ENCODE measurements at regions of chr21 and their contacts with region 1.

Region 1: DNA sequence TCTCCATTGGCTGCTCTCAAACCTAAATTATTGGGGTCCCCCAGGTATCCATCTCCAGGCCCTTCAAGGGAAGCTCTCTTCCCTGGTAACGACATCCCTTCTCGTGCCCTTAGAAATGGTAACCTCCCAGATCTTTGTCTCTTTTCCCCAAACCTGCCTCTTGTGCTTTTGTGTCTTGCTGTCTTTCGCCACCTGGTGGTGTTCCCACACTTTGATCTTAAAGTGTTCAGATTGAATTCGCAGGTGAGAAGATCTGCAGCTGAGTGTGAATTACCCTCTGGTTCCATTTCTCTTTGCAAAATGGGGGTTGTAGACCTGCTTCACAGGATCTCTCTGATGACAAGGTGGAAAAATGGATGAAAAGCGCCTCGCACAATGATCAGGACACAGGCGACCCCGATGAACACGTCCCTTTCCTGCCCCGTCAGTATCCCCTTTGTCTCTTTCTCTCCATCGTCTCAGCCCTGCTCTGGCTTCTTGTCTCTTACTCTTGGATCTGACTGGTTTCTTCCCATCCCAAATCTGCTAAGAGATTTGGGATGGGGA is 53.1 kb downstream of the DOP1B start:
- DNase-seq: peak; percentile 39
- H3K4me3 ChIP-seq: no peak overlapping the region
- H3K27ac ChIP-seq: peak overlapping the region in 1 of 2 experiments; percentile 74; a peak in 2 of 4 replicates
- H3K4me1 ChIP-seq: peaks cover 0 to 39% of the 10 kb centered on the region in 2 experiments; a peak in 2 of 4 replicates
- H3K27me3 ChIP-seq: no peaks in the 10 kb centered on the region
- CTCF ChIP-seq: peak; percentile 68
- EP300 ChIP-seq: no peak
- RAD21 ChIP-seq: peak; percentile 75

Region 2: DNA sequence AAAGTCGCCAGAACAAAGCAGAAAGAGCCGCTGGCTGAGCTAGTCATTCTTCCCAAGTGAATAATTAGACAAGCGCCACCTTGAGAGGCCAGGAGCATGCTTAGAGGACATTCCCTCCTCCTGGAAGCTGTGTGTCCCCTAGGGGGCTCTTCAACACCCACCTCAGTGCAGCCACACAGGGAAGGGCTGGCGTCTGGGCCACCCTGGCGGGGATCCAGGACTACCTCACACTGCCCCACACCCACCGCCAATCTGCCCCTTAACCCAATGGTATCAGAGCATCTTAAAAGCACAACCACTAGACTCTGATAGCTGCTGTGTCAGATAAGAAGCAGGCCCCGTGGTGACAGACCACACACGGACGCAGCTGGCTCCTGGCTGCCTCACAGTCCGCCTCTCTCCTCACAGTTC is 174.3 kb before region 1 on chr21:
- CTCF ChIA-PET with region 1: no interaction called
- POLR2A ChIA-PET with region 1: no interaction called
- DNase-seq: peak; percentile 90
- H3K4me3 ChIP-seq: no peak overlapping the region
- H3K27ac ChIP-seq: peak overlapping the region in 1 of 2 experiments; percentile 94; a peak in 2 of 4 replicates
- H3K4me1 ChIP-seq: peaks cover 0 to 25% of the 10 kb centered on the region in 2 experiments; a peak in 2 of 4 replicates
- H3K27me3 ChIP-seq: no peaks in the 10 kb centered on the region
- CTCF ChIP-seq: 0 out of 2 replicates have a peak, but pooled peaks have one; percentile 9
- EP300 ChIP-seq: peak in 1 of 2 experiments; percentile 92; a peak in 2 of 4 replicates
- RAD21 ChIP-seq: peak; percentile 44

Region 3: DNA sequence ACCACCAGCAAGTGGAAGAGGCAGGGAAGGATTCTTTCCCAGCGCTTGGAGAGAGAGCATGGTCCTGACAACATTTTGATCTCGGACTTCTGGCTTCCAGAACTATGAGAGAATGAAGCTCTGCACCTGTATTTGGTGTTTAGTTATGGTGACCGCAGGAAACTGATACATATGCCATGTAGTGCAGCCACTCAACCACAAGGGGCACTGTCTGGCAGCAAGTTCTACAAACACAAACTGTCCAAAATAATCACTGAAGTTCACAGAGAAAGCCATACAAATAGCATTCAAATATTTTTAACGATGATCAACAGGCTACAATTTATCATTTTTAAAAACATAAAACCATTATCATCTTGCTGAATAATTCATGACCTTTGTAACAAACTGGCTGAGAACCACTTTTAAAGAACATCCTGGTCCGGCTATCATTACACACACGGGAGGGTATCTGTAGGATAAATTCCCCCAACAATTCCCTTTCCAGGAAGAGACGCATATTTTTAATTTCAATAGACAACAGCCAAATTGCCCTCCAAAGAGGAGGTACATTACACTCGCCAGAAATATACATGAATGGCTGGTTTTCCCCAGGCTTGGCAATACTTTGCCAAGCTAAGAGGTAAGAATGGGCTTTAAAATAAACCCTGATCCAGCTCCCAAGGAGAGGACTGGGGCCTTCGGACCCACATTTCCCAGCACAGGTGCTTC is 84.0 kb before region 1 on chr21:
- CTCF ChIA-PET with region 1: interaction called, 13 read pairs
- POLR2A ChIA-PET with region 1: no interaction called
- DNase-seq: peak; percentile 60
- H3K4me3 ChIP-seq: no peak overlapping the region; a peak in 1 of 4 replicates
- H3K27ac ChIP-seq: no peak overlapping the region
- H3K4me1 ChIP-seq: no peaks in the 10 kb centered on the region
- H3K27me3 ChIP-seq: no peaks in the 10 kb centered on the region
- CTCF ChIP-seq: peak; percentile 94
- EP300 ChIP-seq: no peak
- RAD21 ChIP-seq: peak; percentile 60

Region 4: GRCh38 chr21:36141513-36141925 is 68.2 kb before region 1 on chr21:
- CTCF ChIA-PET with region 1: interaction called, 41 read pairs
- POLR2A ChIA-PET with region 1: no interaction called
- DNase-seq: peak; percentile 67
- H3K4me3 ChIP-seq: no peak overlapping the region; a peak in 1 of 4 replicates
- H3K27ac ChIP-seq: no peak overlapping the region
- H3K4me1 ChIP-seq: no peaks in the 10 kb centered on the region; a peak in 1 of 4 replicates
- H3K27me3 ChIP-seq: no peaks in the 10 kb centered on the region
- CTCF ChIP-seq: peak; percentile 95
- EP300 ChIP-seq: no peak
- RAD21 ChIP-seq: peak; percentile 86

Region 5: GRCh38 chr21:36156339-36156814 is 53.3 kb before region 1 on chr21:
- CTCF ChIA-PET with region 1: interaction called, 16 read pairs
- POLR2A ChIA-PET with region 1: no interaction called
- DNase-seq: peak; percentile 99
- H3K4me3 ChIP-seq: peak overlapping the region; percentile 69 to 92
- H3K27ac ChIP-seq: peak overlapping the region in 1 of 2 experiments; percentile 43; a peak in 1 of 4 replicates
- H3K4me1 ChIP-seq: peaks cover 0 to 6% of the 10 kb centered on the region in 2 experiments; a peak in 1 of 4 replicates
- H3K27me3 ChIP-seq: no peaks in the 10 kb centered on the region
- CTCF ChIP-seq: no peak
- EP300 ChIP-seq: no peak
- RAD21 ChIP-seq: no peak

Region 6: DNA sequence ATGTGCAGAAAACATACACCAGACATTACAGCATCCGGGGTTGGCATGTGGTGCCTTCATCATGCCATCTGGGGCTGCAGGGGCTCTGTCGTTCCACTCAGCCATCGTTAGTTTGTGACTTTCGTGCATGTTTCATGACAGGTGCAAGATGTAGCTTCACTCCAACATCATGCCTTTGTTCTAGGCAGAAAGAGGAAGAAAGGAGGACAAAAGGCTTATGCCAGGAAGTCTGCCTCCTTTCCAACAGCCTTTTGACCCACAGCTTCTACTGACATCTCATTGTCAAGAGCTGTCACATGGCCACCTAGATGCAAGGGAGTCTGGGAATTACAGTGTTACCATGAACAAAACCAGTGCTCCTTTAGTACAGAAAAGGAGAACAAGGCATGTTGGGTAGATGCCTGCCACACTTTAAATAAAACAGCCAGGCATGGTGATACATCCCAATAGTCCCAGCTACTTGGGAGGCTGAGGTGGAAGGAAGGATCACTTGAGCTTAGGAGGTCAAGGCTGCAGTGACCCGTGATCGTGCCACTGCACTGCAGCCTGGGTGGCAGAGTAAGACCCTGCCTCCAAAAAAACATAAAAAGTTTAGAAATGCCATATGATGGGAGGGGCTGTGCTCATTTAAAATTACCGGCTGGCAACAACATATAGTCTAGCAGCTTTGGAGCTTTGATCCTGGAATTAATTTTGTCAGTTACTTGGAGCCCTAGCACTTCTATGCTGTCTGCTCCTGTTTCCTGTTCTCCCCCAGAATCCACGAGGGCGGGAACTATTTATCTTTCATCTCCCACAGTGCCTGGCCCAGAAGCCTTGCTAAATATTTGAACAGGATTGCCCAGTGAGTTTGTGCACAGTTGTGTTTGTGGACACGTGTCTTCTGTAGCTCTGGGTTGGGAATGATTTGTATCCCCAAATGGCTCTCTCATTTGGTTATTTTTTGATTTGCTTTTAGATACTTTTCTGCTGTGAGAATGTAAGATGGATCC is 45.7 kb before region 1 on chr21:
- CTCF ChIA-PET with region 1: interaction called, 12 read pairs
- POLR2A ChIA-PET with region 1: no interaction called
- DNase-seq: peak; percentile 23
- H3K4me3 ChIP-seq: no peak overlapping the region
- H3K27ac ChIP-seq: no peak overlapping the region
- H3K4me1 ChIP-seq: peaks cover 0 to 8% of the 10 kb centered on the region in 2 experiments; a peak in 1 of 4 replicates
- H3K27me3 ChIP-seq: no peaks in the 10 kb centered on the region
- CTCF ChIP-seq: no peak
- EP300 ChIP-seq: no peak
- RAD21 ChIP-seq: no peak

Region 7: GRCh38 chr21:36223451-36223850 is 13.8 kb after region 1 on chr21:
- CTCF ChIA-PET with region 1: interaction called, 16 read pairs
- POLR2A ChIA-PET with region 1: no interaction called
- DNase-seq: no peak
- H3K4me3 ChIP-seq: no peak overlapping the region
- H3K27ac ChIP-seq: no peak overlapping the region
- H3K4me1 ChIP-seq: no peaks in the 10 kb centered on the region
- H3K27me3 ChIP-seq: no peaks in the 10 kb centered on the region
- CTCF ChIP-seq: no peak
- EP300 ChIP-seq: no peak
- RAD21 ChIP-seq: no peak